ENCODE measurements at regions of chr19 and their contacts with region 1.

Region 1: GRCh38 chr19:36028313-36029041 is 4.2 kb downstream of the CLIP3 start:
- DNase-seq: no peak
- H3K4me3 Mint-ChIP-seq: no peak overlapping the region
- H3K27ac Mint-ChIP-seq: no peak overlapping the region
- H3K4me1 Mint-ChIP-seq: peaks cover 10% of the 10 kb centered on the region
- H3K27me3 Mint-ChIP-seq: no peaks in the 10 kb centered on the region

Region 2: GRCh38 chr19:35107546-35107945 is 920.9 kb before region 1 on chr19:
- CTCF ChIA-PET with region 1: no interaction called
- POLR2A ChIA-PET with region 1: no interaction called
- intact Hi-C with region 1: loop called (anchors 10 kb)
- DNase-seq: peak; percentile 44
- H3K4me3 Mint-ChIP-seq: no peak overlapping the region
- H3K27ac Mint-ChIP-seq: no peak overlapping the region
- H3K4me1 Mint-ChIP-seq: peaks cover 10% of the 10 kb centered on the region
- H3K27me3 Mint-ChIP-seq: no peaks in the 10 kb centered on the region

Region 3: DNA sequence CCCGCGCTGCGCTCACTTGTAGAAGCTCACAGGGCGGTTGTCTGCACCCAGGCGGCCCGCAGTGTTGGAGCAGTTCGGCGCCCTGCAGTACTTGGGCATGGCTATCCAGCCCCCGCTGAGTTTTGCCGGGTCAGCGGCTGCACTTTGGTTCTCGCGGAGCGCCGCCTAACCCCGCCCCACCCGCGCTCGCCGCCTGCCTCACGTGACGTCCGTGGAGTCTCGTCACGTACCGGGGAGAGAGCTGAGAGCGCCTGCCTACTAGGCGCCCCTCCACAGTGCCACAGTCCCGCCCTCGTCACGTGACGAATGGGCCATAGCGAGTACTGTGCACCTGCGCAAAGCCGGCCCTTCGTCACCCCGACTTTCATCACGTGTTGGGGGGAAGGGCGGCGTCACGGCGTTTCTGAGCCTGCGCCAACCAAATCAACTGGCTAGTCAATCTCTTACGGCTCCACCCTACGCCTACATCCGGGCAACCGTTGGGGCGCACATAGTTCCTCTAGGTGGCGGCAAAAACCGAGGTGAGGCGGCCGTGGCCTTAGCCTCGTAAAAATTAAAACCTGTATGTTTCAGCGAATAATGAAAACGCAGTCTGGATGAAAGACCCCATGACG is 25.7 kb after region 1 on chr19 and contains the start of gene THAP8:
- CTCF ChIA-PET with region 1: no interaction called
- POLR2A ChIA-PET with region 1: no interaction called
- intact Hi-C with region 1: no loop called
- DNase-seq: peak; percentile 100
- H3K4me3 Mint-ChIP-seq: peak within 1 kb of the TSS; percentile 98
- H3K27ac Mint-ChIP-seq: peak within 1 kb of the TSS; percentile 98
- H3K4me1 Mint-ChIP-seq: peaks cover 18% of the 10 kb centered on the region
- H3K27me3 Mint-ChIP-seq: no peaks in the 10 kb centered on the region
- total RNA-seq, gene THAP8: 2.1 to 2.2 TPM

Measured in activated CD4-positive, alpha-beta memory T cell treated with anti-CD3 and anti-CD28 coated beads for 36 hours (primary cell).